PC-3 (cell line): ENCODE measurements at regions of chr4 and their contacts with region 1.

Region 1: DNA sequence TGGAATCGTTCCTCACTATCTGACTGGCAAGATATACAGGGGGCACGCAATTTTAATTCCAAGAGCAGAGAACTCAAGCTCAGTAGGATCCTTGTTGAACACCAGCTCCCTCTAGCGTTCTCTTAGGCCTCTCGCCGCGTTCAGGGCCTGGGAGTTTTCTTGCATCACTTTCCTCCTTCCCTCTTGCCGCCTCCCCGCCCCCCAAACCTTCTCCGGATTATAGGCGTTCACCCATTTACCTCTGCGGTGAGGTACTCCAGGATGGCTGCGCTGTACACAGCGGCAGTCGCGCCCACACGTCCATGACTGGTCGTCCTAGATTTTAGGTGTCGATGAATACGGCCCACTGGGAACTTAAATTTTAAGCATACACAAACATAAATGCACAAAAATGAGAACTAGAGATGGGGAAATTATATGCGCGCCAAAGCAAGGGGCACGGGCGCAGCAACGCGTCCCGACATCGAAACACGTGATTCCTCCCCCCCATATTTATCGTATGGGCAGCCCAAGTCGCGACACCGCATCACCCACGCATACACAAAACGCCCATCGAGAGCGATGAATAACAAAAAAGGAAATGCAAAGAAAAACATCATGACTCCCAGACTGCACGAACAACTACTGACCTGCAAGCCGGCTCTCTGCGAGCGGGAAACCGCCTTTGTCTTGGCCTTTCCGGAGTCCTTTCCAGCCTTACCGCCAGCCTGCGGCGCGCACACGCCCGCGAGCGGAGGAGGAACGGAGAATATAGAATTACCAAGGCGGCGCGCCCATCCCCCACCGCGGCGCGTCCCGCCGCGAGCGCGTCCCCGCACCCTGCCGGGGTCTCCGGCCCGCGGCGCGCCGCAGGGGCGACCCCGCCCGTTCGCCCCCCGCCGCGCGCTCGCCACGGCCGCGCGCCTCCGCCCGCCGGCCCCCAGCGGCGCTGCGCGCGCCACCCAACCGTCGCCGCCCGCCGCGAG is 759 bp downstream of the H2AZ1 start:
- DNase-seq: peak; percentile 92
- ATAC-seq: peak; percentile 32
- H3K4me3 ChIP-seq: peak overlapping the region; percentile 96
- H3K27ac ChIP-seq: peak overlapping the region; percentile 63
- H3K4me1 ChIP-seq: peaks cover 33% of the 10 kb centered on the region
- H3K27me3 ChIP-seq: no peaks in the 10 kb centered on the region
- CTCF ChIP-seq: peak; percentile 70

Region 2: DNA sequence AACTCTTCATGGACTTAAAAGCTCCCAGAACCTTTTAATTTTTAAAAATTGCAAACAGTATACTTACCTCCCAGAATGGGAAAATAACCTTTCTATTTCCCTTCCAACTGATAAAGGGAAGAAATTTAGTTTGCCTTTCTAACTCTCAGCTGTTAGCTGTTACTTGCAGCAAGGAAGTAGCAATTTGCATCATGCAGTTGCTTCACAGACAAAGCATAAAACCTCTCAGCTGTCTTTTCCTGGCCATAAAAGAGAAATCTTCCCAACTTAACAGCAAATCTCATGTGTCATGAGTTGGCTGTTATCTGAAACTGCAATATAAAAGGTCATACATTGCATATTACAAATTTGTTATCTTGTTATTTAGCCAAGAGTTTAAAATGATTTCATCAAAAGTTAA is 420.1 kb before region 1 on chr4:
- CTCF ChIA-PET with region 1: no interaction called
- POLR2A ChIA-PET with region 1: no interaction called
- intact Hi-C with region 1: no loop called
- DNase-seq: no peak
- ATAC-seq: no peak
- H3K4me3 ChIP-seq: no peak overlapping the region
- H3K27ac ChIP-seq: no peak overlapping the region
- H3K4me1 ChIP-seq: no peaks in the 10 kb centered on the region
- H3K27me3 ChIP-seq: no peaks in the 10 kb centered on the region; the same call in 1 of the 2 replicates
- CTCF ChIP-seq: no peak

Region 3: GRCh38 chr4:99894161-99894997 is 54.9 kb before region 1 on chr4 and contains the start of gene LAMTOR3:
- CTCF ChIA-PET with region 1: no interaction called
- POLR2A ChIA-PET with region 1: interaction called, 10 read pairs
- intact Hi-C with region 1: loop called (anchors 5 kb)
- DNase-seq: peak; percentile 85
- ATAC-seq: peak; percentile 99
- H3K4me3 ChIP-seq: peak within 1 kb of the TSS; percentile 84
- H3K27ac ChIP-seq: no peak within 1 kb of the TSS; the same call in 1 of the 2 replicates
- H3K4me1 ChIP-seq: 0 out of 2 replicates have a peak, but pooled peaks cover 4% of the 10 kb centered on the region
- H3K27me3 ChIP-seq: no peaks in the 10 kb centered on the region
- CTCF ChIP-seq: no peak
- total RNA-seq, gene LAMTOR3: 13.5 and 14.0 TPM in 2 replicates

Region 4: DNA sequence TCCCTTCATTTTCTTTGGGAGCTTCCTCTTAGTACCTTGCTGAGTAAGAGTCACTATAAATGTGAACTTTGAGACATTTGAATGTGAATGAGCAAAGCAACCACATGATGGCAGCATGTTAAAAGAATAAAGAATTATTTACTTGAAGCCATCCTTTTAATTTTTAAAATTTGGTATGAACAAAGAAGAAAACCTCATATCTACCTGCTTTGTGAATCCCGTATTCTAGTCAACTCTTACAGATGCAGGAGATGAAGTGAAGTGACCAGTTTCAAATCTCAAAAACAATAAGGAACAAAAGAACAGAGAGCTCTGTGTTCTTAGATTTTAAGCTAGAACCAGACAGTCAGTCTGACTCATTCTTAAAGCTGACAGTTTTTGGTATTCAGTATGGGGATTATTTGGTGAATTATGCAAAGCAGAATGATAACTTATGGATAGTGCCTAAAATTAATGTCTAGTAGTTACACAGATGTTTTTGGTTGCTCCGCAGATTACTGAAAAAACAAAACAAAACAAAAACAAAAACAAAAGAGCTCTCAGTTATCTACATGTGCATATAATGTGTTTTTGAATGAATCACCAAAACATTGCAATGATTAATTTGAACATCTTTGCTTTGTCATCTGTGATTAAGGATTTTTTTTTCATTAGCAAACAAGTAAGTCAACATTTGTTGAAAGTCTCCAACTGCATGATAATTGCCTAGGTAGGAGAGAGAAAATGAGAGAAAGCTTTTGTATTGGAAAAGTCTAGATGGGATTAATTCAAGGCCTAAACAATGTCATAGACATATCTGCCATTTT is 48.9 kb after region 1 on chr4:
- CTCF ChIA-PET with region 1: interaction called, 3 read pairs
- POLR2A ChIA-PET with region 1: no interaction called
- intact Hi-C with region 1: loop called (anchors 5 kb)
- DNase-seq: peak; percentile 59
- ATAC-seq: peak; percentile 80
- H3K4me3 ChIP-seq: peak overlapping the region; percentile 20; the same call in 1 of the 2 replicates
- H3K27ac ChIP-seq: peak overlapping the region; percentile 57
- H3K4me1 ChIP-seq: peaks cover 22% of the 10 kb centered on the region
- H3K27me3 ChIP-seq: no peaks in the 10 kb centered on the region
- CTCF ChIP-seq: peak; percentile 74

Region 5: GRCh38 chr4:100060765-100061416 is 111.6 kb after region 1 on chr4:
- CTCF ChIA-PET with region 1: no interaction called
- POLR2A ChIA-PET with region 1: no interaction called
- intact Hi-C with region 1: loop called (anchors 2 kb)
- DNase-seq: no peak
- ATAC-seq: no peak
- H3K4me3 ChIP-seq: no peak overlapping the region
- H3K27ac ChIP-seq: no peak overlapping the region
- H3K4me1 ChIP-seq: peaks cover 25% of the 10 kb centered on the region
- H3K27me3 ChIP-seq: no peaks in the 10 kb centered on the region
- CTCF ChIP-seq: no peak